ENCODE measurements at regions of chrX and their contacts with region 1.

Region 1: DNA sequence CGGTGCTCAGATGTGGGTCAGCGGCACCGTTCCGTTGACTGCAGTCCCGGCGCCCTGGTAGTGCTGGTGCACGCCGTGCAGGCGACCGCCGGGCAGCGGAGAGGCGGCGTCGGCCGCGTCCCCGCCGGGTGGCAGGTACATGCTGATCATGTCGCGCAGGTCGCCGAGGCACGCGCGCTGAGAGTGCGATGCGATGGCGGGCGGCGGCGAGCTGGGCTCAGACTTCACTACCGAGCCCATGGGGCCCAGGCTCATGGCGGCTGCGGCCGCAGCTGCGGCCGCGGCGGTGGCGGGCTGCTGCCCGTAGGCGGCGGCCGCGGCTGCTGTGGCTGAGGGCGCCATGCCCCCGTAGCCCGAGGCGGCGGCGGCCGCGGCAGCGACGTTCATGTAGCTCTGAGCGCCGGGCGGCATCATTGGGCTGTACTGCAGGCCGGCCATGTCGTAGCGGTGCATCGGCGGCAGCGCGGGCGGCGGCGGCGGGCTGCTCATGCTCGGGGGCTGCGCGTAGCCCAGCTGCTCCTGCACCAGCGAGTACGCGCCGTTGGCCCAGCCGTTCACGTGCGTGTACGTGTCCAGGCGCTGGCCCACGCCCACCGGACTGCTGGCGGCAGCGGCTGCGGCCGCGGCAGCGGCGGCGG is 1.0 kb downstream of the SOX3 start:
- DNase-seq: peak; percentile 9
- H3K4me3 ChIP-seq: peak overlapping the region; percentile 33
- H3K27ac ChIP-seq: no peak overlapping the region
- H3K4me1 ChIP-seq: no peaks in the 10 kb centered on the region
- H3K27me3 ChIP-seq: peaks cover 100% of the 10 kb centered on the region
- CTCF ChIP-seq: no peak

Region 2: GRCh38 chrX:140123446-140123845 is 380.4 kb before region 1 on chrX:
- CTCF ChIA-PET with region 1: interaction called, 3 read pairs
- POLR2A ChIA-PET with region 1: no interaction called
- intact Hi-C with region 1: loop called (anchors 10 kb)
- DNase-seq: peak; percentile 14
- H3K4me3 ChIP-seq: no peak overlapping the region
- H3K27ac ChIP-seq: no peak overlapping the region
- H3K4me1 ChIP-seq: no peaks in the 10 kb centered on the region
- H3K27me3 ChIP-seq: no peaks in the 10 kb centered on the region
- CTCF ChIP-seq: peak; percentile 66

Region 3: DNA sequence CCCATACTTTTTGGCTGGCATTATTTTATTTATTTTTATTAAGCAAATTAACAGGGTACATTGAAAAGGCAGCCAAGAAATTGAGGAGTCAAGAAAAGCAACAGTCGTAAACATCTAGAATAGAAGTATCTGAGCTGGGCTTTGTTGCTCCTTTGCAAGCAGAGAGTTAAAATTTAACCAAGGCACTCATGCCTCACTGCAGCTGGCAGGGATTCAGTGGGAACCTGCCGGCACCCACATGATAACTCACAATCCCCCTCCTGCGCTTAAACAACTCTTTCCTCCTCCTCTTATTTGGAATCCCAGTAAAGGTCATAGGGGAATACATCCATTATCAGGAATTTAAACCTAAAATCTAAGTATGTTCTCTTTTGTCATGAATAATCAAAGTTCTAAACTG is 114.5 kb before region 1 on chrX:
- CTCF ChIA-PET with region 1: no interaction called
- POLR2A ChIA-PET with region 1: no interaction called
- intact Hi-C with region 1: no loop called
- DNase-seq: no peak
- H3K4me3 ChIP-seq: no peak overlapping the region
- H3K27ac ChIP-seq: no peak overlapping the region
- H3K4me1 ChIP-seq: no peaks in the 10 kb centered on the region
- H3K27me3 ChIP-seq: peaks cover 3% of the 10 kb centered on the region
- CTCF ChIP-seq: no peak

Measured in A673 (cell line).